ENCODE measurements at regions of chr3 and their contacts with region 1.

Region 1: GRCh38 chr3:113051302-113051711 is 60.5 kb downstream of the GTPBP8 start:
- DNase-seq: peak; percentile 81
- H3K4me3 Mint-ChIP-seq: no peak overlapping the region
- H3K27ac Mint-ChIP-seq: no peak overlapping the region
- H3K4me1 Mint-ChIP-seq: no peaks in the 10 kb centered on the region
- H3K27me3 Mint-ChIP-seq: peaks cover 4% of the 10 kb centered on the region

Region 2: GRCh38 chr3:112585782-112586181 is 465.5 kb before region 1 on chr3:
- intact Hi-C with region 1: no loop called
- DNase-seq: no peak
- H3K4me3 Mint-ChIP-seq: no peak overlapping the region
- H3K27ac Mint-ChIP-seq: no peak overlapping the region
- H3K4me1 Mint-ChIP-seq: peaks cover 10% of the 10 kb centered on the region
- H3K27me3 Mint-ChIP-seq: no peaks in the 10 kb centered on the region

Region 3: GRCh38 chr3:113111011-113111707 is 59.9 kb after region 1 on chr3:
- intact Hi-C with region 1: loop called (anchors 5 kb)
- DNase-seq: peak; percentile 5
- H3K4me3 Mint-ChIP-seq: no peak overlapping the region
- H3K27ac Mint-ChIP-seq: peak overlapping the region; percentile 21
- H3K4me1 Mint-ChIP-seq: peaks cover 33% of the 10 kb centered on the region
- H3K27me3 Mint-ChIP-seq: no peaks in the 10 kb centered on the region

Region 4: GRCh38 chr3:113136071-113136470 is 84.8 kb after region 1 on chr3:
- intact Hi-C with region 1: loop called (anchors 1 kb)
- DNase-seq: no peak
- H3K4me3 Mint-ChIP-seq: no peak overlapping the region
- H3K27ac Mint-ChIP-seq: no peak overlapping the region
- H3K4me1 Mint-ChIP-seq: peaks cover 2% of the 10 kb centered on the region
- H3K27me3 Mint-ChIP-seq: no peaks in the 10 kb centered on the region

Region 5: GRCh38 chr3:113211330-113212149 is 160.2 kb after region 1 on chr3 and contains the start of gene BOC:
- intact Hi-C with region 1: loop called (anchors 10 kb)
- DNase-seq: no peak
- H3K4me3 Mint-ChIP-seq: peak within 1 kb of the TSS; percentile 83
- H3K27ac Mint-ChIP-seq: no peak within 1 kb of the TSS
- H3K4me1 Mint-ChIP-seq: peaks cover 15% of the 10 kb centered on the region
- H3K27me3 Mint-ChIP-seq: peaks cover 73% of the 10 kb centered on the region
- total RNA-seq, gene BOC: 2.1 and 3.3 TPM in 2 replicates

Region 6: DNA sequence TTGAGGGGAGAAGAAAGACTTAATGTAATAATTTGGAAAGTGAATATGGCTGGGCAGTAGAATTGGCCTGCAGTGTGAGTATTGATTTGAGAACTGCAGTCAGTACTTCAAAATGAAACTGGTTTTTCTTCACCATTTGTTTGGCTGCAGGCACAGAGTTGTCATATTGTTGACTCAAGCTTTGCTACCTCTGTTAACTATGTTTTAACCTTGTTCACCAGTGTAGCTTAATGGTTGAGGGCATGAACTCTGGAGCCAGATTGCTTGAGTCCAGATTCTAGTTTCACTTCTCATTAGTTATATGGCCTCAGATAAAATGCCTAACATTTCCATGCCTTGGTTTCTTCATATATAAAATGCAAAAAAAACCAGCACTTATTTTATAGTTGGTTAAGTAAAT is 325.9 kb after region 1 on chr3:
- intact Hi-C with region 1: no loop called
- DNase-seq: no peak
- H3K4me3 Mint-ChIP-seq: no peak overlapping the region
- H3K27ac Mint-ChIP-seq: no peak overlapping the region
- H3K4me1 Mint-ChIP-seq: no peaks in the 10 kb centered on the region
- H3K27me3 Mint-ChIP-seq: no peaks in the 10 kb centered on the region